ENCODE measurements at regions of chr2 and their contacts with region 1.

Region 1: DNA sequence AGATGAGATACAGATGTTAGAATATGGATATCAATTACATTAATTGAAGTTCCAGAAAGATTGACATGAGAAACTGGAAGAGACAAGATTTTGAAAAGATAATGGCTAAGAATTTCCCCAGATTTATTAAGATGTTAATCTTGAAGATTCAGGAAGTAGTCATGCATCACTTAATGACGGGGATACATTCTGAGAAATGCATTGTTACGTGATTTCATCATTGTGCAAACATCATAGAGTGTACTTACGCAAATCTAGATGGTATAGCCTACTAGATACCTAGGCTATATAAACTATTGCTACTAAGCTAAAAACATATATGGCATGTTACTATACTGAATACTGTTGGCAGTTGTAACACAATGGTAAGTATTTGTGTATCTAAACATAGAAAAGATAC is 6.8 kb upstream of the CHMP3 start:
- DNase-seq: no peak
- H3K4me3 Mint-ChIP-seq: no peak overlapping the region
- H3K27ac Mint-ChIP-seq: no peak overlapping the region
- H3K4me1 Mint-ChIP-seq: no peaks in the 10 kb centered on the region
- H3K27me3 Mint-ChIP-seq: no peaks in the 10 kb centered on the region

Region 2: GRCh38 chr2:86584151-86584913 is 14.3 kb after region 1 on chr2:
- CTCF ChIA-PET with region 1: no interaction called
- intact Hi-C with region 1: loop called (anchors 2 kb)
- DNase-seq: peak; percentile 22
- H3K4me3 Mint-ChIP-seq: no peak overlapping the region
- H3K27ac Mint-ChIP-seq: peak overlapping the region; percentile 71
- H3K4me1 Mint-ChIP-seq: peaks cover 18% of the 10 kb centered on the region
- H3K27me3 Mint-ChIP-seq: no peaks in the 10 kb centered on the region